ENCODE measurements at regions of chr20 and their contacts with region 1.

Region 1: GRCh38 chr20:62793912-62794724 is 2.2 kb upstream of the MRGBP start:
- DNase-seq: peak; percentile 97
- H3K4me3 ChIP-seq: peak overlapping the region; percentile 81
- H3K27ac ChIP-seq: peak overlapping the region; percentile 92
- H3K4me1 ChIP-seq: peaks cover 48% of the 10 kb centered on the region
- H3K27me3 ChIP-seq: no peaks in the 10 kb centered on the region
- CTCF ChIP-seq: no peak

Region 2: DNA sequence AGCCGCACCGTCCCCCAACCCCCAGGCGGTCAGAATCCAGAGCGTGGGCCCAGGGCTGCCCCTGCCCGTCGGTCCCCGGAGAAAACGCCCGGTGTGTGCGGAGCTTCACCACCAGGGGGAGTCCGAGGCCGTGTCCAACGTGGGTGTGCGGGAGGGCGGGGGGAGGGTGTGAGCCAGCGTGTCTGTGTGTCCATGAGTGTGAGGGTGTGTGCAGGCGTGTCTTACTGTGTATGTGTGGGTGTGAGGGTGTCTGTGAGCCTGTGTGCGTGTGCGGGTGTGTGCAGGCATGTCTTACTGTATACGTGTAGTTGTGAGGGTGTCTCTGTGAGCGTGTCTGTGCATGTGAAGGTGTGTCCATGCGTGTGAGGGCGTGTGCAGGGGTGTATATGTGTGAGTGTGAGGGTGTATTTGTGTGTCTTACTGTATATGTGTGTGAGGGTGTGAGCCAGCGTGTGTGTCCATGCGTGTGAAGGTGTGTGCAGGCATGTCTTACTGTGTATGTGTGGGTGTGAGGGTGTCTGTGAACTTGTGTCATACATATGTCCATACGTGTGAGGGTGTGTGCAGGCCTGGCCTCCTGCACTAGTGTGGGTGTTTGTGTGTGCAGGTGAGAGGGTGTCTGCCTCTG is 293.8 kb before region 1 on chr20:
- intact Hi-C with region 1: loop called (anchors 10 kb)
- DNase-seq: peak; percentile 81
- H3K4me3 ChIP-seq: no peak overlapping the region
- H3K27ac ChIP-seq: no peak overlapping the region
- H3K4me1 ChIP-seq: peaks cover 25% of the 10 kb centered on the region
- H3K27me3 ChIP-seq: peaks cover 15% of the 10 kb centered on the region
- CTCF ChIP-seq: peak; percentile 84

Region 3: DNA sequence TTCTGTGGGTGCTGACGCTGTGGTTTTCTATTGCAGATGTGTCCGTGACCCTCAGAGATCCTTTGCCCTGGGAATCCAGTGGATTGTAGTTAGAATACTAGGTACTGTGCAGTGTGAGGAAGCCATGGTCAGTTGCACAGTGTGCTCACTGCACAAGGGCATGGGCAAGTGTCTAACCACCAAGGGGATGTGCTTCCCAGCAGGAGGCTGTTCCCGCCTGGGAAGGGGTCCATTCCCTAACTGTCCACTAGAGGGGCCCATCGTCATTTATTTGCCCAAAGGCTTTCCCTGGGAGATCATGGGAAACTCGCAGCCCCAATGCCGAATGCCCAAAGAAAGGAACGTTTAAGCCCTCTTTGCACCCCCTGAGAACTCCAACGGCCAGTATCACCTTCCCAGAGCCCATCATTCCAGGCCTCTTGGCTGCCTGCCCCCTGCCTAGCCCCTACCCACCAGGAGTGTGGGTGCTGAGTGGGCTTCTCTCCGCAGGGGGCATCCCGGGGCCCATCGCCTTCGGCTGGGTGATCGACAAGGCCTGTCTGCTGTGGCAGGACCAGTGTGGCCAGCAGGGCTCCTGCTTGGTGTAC is 125.6 kb before region 1 on chr20:
- intact Hi-C with region 1: loop called (anchors 5 kb)
- DNase-seq: peak; percentile 66
- H3K4me3 ChIP-seq: no peak overlapping the region
- H3K27ac ChIP-seq: no peak overlapping the region
- H3K4me1 ChIP-seq: peaks cover 26% of the 10 kb centered on the region
- H3K27me3 ChIP-seq: peaks cover 7% of the 10 kb centered on the region
- CTCF ChIP-seq: peak; percentile 88